PC-9 (cell line): ENCODE measurements at regions of chr20 and their contacts with region 1.

Region 1: DNA sequence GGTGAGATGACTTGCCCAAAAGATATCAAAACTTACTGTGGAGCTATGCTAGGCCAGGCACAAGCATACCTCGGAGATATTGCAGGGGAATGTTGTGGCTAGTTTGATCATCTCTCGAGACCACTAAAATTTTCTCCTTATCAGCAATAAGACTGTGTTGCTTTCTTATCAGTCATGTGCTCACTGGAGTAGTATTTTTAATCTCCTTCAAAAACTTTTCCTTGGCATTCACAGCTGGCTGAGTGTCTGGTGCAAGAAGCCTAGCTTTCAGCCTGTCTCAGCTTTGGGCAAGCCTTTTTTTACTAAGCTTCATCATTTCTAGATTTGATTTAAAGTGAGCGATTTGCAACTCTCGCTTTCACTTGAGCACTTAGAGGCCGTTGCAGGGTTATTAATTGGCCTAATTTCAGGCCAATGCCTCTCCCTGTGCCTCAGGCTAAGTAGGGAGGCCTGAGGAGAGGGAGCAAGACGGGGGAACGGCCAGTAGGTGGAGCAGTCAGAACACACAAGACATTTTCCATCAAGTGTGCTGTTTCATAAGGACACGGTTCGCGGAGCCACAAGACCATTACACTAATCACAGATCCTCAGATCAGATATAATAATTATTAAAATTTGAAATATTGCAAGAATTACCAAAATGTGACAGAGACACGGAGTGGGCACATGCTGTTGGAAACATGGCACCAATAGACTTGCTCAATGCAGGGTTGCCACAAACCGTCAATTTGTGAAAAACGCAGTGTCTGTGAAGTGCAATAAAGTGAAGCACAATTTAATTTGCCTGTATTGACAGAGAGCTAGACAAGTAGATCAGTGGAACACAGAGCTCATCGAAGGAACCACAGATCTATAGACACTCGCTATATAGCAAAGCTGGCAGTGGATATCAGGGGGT is 106.8 kb upstream of the SIRPG start:
- DNase-seq: peak; percentile 62 to 76
- H3K4me3 ChIP-seq: no peak overlapping the region
- H3K27ac ChIP-seq: no peak overlapping the region
- H3K4me1 ChIP-seq: peaks cover 40% of the 10 kb centered on the region
- H3K27me3 ChIP-seq: no peaks in the 10 kb centered on the region
- CTCF ChIP-seq: peak; percentile 86

Region 2: GRCh38 chr20:1423625-1424106 is 340.7 kb before region 1 on chr20:
- CTCF ChIA-PET with region 1: no interaction called
- POLR2A ChIA-PET with region 1: no interaction called
- intact Hi-C with region 1: no loop called
- DNase-seq: peak in 1 of 2 experiments; percentile 41
- H3K4me3 ChIP-seq: no peak overlapping the region
- H3K27ac ChIP-seq: no peak overlapping the region
- H3K4me1 ChIP-seq: peaks cover 31% of the 10 kb centered on the region
- H3K27me3 ChIP-seq: no peaks in the 10 kb centered on the region
- CTCF ChIP-seq: no peak

Region 3: GRCh38 chr20:1567392-1568162 is 196.8 kb before region 1 on chr20:
- CTCF ChIA-PET with region 1: interaction called, 3 read pairs
- POLR2A ChIA-PET with region 1: no interaction called
- intact Hi-C with region 1: loop called (anchors 1 kb)
- DNase-seq: peak; percentile 76 to 97
- H3K4me3 ChIP-seq: no peak overlapping the region
- H3K27ac ChIP-seq: peak overlapping the region; percentile 99
- H3K4me1 ChIP-seq: peaks cover 67% of the 10 kb centered on the region
- H3K27me3 ChIP-seq: no peaks in the 10 kb centered on the region
- CTCF ChIP-seq: no peak

Region 4: GRCh38 chr20:1657556-1658334 is 106.6 kb before region 1 on chr20 and contains the start of gene SIRPG:
- CTCF ChIA-PET with region 1: no interaction called
- POLR2A ChIA-PET with region 1: no interaction called
- intact Hi-C with region 1: no loop called
- DNase-seq: no peak
- H3K4me3 ChIP-seq: no peak within 1 kb of the TSS
- H3K27ac ChIP-seq: no peak within 1 kb of the TSS
- H3K4me1 ChIP-seq: no peaks in the 10 kb centered on the region
- H3K27me3 ChIP-seq: no peaks in the 10 kb centered on the region
- CTCF ChIP-seq: no peak
- total RNA-seq, gene SIRPG: 2.1 TPM in 2 replicates

Region 5: GRCh38 chr20:1685304-1686052 is 78.9 kb before region 1 on chr20:
- CTCF ChIA-PET with region 1: no interaction called
- POLR2A ChIA-PET with region 1: no interaction called
- intact Hi-C with region 1: no loop called
- DNase-seq: no peak
- H3K4me3 ChIP-seq: no peak overlapping the region
- H3K27ac ChIP-seq: no peak overlapping the region
- H3K4me1 ChIP-seq: peaks cover 15% of the 10 kb centered on the region
- H3K27me3 ChIP-seq: no peaks in the 10 kb centered on the region
- CTCF ChIP-seq: no peak

Region 6: DNA sequence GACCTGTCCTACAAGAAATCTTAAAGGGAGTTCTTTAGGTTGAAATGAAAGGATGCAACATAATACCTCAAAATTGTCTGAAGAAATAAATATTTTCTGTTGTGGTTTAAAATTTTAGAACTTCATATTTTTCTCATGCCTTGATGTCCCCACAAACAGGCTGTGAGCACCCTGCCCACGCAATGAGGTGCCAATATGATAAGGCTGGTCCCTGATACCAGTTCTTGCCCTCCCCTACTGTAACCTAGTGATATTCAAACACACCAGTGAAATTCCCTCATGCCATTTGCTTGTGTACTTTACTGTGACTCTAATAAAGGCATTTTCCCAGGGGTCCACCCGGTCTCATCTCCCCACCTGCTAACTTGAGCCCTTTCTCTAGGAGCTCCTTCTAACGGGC is 39.5 kb before region 1 on chr20:
- CTCF ChIA-PET with region 1: no interaction called
- POLR2A ChIA-PET with region 1: no interaction called
- intact Hi-C with region 1: no loop called
- DNase-seq: no peak
- H3K4me3 ChIP-seq: no peak overlapping the region
- H3K27ac ChIP-seq: no peak overlapping the region
- H3K4me1 ChIP-seq: peaks cover 43% of the 10 kb centered on the region
- H3K27me3 ChIP-seq: no peaks in the 10 kb centered on the region
- CTCF ChIP-seq: no peak

Region 7: DNA sequence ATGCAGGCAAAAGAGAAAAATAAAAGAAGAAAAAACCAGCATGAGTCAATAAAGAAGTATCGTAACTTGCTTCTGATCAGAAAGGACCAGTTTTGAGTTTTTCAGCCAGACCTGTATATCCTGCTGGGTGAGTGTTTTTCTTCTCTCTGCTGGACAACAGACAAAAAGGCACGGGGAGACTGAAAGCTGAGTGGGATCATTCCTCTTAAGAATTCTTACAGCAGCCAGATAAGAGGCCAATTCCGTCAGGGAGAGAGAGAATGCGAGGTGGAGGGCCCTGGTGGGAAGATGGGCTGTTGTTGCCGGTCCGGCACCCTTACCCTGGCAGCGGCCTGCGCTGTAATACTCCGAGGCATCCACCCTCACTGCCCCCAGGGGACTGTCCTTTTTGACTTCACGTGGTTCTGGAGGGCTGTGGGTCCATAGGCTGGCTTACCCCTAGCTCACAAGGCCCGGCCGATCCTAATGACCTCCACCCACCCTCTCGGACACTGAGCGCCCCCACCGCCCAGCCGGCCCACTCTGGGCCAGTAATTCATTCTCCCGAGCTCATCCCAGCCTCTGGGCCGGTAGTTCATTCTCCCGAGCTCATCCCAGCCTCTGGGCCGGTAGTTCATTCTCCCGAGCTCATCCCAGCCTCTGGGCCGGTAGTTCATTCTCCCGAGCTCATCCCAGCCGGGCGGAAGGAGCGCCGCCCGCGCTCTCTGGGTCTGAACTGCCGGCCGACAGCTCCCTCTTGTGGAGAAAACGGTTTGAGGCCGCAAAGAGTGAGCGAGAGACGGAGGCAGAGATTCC is 12.5 kb after region 1 on chr20:
- CTCF ChIA-PET with region 1: interaction called, 16 read pairs
- POLR2A ChIA-PET with region 1: no interaction called
- intact Hi-C with region 1: loop called (anchors 1 kb)
- DNase-seq: peak; percentile 86 to 90
- H3K4me3 ChIP-seq: peak overlapping the region; percentile 70
- H3K27ac ChIP-seq: peak overlapping the region; percentile 74
- H3K4me1 ChIP-seq: peaks cover 27% of the 10 kb centered on the region
- H3K27me3 ChIP-seq: no peaks in the 10 kb centered on the region
- CTCF ChIP-seq: peak; percentile 89

Region 8: DNA sequence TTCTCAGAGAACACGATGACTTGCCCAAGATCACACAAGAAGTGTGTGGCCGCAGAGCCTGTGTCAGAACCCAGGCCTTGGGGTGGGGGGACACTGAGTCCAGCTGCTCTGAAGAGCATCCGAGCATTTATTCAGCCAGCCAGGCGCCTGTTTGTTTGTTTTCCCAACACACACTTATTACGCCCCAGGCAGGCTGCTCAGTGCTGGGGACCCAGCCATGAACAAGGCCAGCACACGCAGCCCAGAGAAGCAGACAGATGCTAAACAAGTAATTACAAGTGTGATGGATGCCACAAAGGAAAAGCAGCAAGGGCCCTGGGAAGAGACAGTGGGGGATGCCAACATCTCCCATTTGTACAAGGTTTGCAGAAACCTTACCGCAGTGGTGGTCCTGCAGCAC is 111.4 kb after region 1 on chr20:
- CTCF ChIA-PET with region 1: interaction called, 3 read pairs
- POLR2A ChIA-PET with region 1: interaction called, 31 read pairs
- intact Hi-C with region 1: no loop called
- DNase-seq: no peak
- H3K4me3 ChIP-seq: no peak overlapping the region
- H3K27ac ChIP-seq: no peak overlapping the region
- H3K4me1 ChIP-seq: 0 out of 2 replicates have a peak, but pooled peaks cover 6% of the 10 kb centered on the region
- H3K27me3 ChIP-seq: no peaks in the 10 kb centered on the region
- CTCF ChIP-seq: no peak

Region 9: DNA sequence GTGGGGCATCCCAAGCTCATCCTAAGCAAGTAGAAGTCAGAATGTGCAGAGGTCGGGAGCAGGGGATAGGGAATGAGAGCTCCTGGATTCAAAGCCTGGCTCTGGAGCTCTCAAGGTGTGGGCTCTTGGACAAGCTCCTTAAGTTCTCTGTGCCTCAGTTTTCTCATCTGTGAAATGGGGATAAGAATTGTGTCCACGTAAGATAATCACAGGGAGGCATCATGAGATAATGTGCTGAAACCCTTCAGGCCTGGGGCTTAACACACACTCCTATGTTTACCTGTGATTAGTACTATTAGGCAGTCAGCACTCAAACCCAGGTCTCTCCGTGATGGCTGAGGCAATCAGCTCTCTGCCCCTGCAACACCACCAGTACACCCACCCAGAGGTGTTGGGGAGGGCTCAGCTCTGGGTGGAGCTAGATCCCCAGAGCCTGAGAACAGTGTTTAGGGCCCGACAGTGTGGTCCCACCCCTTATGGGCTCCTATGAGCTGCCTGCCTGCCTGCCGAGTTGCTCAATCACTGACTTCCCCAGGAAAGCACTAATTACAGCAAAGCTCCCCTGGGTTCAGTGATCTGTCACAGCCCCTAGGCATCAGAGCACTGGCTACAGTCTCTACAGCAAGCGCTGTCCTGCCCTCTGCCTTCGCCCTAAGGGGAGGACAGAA is 124.5 kb after region 1 on chr20:
- CTCF ChIA-PET with region 1: no interaction called
- POLR2A ChIA-PET with region 1: interaction called, 12 read pairs
- intact Hi-C with region 1: no loop called
- DNase-seq: peak in 1 of 2 experiments; percentile 57
- H3K4me3 ChIP-seq: no peak overlapping the region
- H3K27ac ChIP-seq: no peak overlapping the region
- H3K4me1 ChIP-seq: peaks cover 8% of the 10 kb centered on the region
- H3K27me3 ChIP-seq: no peaks in the 10 kb centered on the region
- CTCF ChIP-seq: no peak

Region 10: GRCh38 chr20:2101865-2102584 is 337.6 kb after region 1 on chr20:
- CTCF ChIA-PET with region 1: no interaction called
- POLR2A ChIA-PET with region 1: no interaction called
- intact Hi-C with region 1: loop called (anchors 1 kb)
- DNase-seq: peak; percentile 79 to 89
- H3K4me3 ChIP-seq: peak overlapping the region; percentile 82
- H3K27ac ChIP-seq: peak overlapping the region; percentile 97
- H3K4me1 ChIP-seq: peaks cover 30% of the 10 kb centered on the region
- H3K27me3 ChIP-seq: no peaks in the 10 kb centered on the region
- CTCF ChIP-seq: no peak

Region 11: DNA sequence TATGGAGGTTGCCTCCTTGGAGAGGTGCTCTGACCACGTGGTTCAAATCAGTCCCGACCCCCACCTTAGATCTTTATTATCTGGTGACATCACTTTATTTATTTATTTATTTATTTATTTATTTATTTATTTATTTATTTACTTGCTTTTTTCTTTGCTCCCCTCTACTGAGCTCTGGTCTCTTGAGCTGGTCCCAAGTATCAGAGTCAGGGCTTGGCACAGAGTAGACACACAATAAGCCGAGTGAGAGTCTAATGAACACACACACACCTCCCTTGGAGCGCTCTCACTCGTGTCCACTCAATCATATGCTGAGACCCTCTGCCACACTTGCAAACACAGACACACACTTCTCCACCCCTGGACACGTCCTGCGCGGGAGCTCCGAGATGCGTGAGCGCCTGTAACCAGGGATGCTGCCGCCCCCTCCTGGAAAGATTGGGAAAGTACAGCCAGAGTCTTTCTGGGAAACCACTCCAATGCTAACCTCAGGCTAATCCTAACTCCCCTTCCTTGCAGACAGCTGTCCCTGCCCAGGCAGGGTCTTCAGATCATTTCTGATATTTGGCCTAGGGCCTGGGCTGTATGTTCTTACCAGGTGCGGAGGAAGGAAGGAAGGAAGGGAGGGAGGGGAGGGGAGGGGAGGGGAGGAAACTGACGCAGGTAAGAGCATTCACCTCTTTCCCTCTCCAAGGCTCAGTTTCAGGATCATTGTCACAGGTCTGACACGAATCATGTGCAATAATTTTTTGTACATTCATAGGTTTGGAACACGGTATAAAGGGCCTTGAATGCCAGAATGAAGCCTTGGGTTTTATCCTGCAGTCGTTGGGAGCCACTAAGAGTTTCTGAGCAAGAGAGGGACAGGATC is 408.2 kb after region 1 on chr20:
- CTCF ChIA-PET with region 1: interaction called, 5 read pairs
- POLR2A ChIA-PET with region 1: no interaction called
- intact Hi-C with region 1: loop called (anchors 10 kb)
- DNase-seq: peak in 1 of 2 experiments; percentile 63
- H3K4me3 ChIP-seq: no peak overlapping the region
- H3K27ac ChIP-seq: no peak overlapping the region
- H3K4me1 ChIP-seq: no peaks in the 10 kb centered on the region
- H3K27me3 ChIP-seq: peaks cover 11% of the 10 kb centered on the region; the same call in 1 of the 2 replicates
- CTCF ChIP-seq: peak; percentile 97